CD8-positive, alpha-beta memory T cell (primary cell): ENCODE measurements at regions of chr2 and their contacts with region 1.

Region 1: GRCh38 chr2:144643537-144644336 is 123.8 kb upstream of the ZEB2 start:
- DNase-seq: no peak
- H3K4me3 ChIP-seq: no peak overlapping the region
- H3K4me3 Mint-ChIP-seq: no peak overlapping the region
- H3K27ac ChIP-seq: no peak overlapping the region
- H3K27ac Mint-ChIP-seq: no peak overlapping the region
- H3K4me1 ChIP-seq: no peaks in the 10 kb centered on the region
- H3K4me1 Mint-ChIP-seq: no peaks in the 10 kb centered on the region
- H3K27me3 ChIP-seq: no peaks in the 10 kb centered on the region
- H3K27me3 Mint-ChIP-seq: no peaks in the 10 kb centered on the region

Region 2: GRCh38 chr2:144479138-144479537 is 164.6 kb before region 1 on chr2:
- CTCF ChIA-PET with region 1: no interaction called
- POLR2A ChIA-PET with region 1: no interaction called
- DNase-seq: no peak
- H3K4me3 ChIP-seq: no peak overlapping the region
- H3K4me3 Mint-ChIP-seq: peak overlapping the region in 1 of 7 donors; percentile 65
- H3K27ac ChIP-seq: no peak overlapping the region
- H3K27ac Mint-ChIP-seq: peak overlapping the region in 2 of 8 donors; percentile 16 to 78
- H3K4me1 ChIP-seq: peaks cover 24% of the 10 kb centered on the region
- H3K4me1 Mint-ChIP-seq: peaks cover 45 to 78% (median 49%) of the 10 kb centered on the region in 3 donors
- H3K27me3 ChIP-seq: no peaks in the 10 kb centered on the region
- H3K27me3 Mint-ChIP-seq: no peaks in the 10 kb centered on the region

Region 3: GRCh38 chr2:144490017-144490416 is 153.7 kb before region 1 on chr2:
- CTCF ChIA-PET with region 1: no interaction called
- POLR2A ChIA-PET with region 1: interaction called, 10 read pairs
- DNase-seq: no peak
- H3K4me3 ChIP-seq: no peak overlapping the region
- H3K4me3 Mint-ChIP-seq: peak overlapping the region in 2 of 7 donors; percentile 5 to 38
- H3K27ac ChIP-seq: no peak overlapping the region
- H3K27ac Mint-ChIP-seq: peak overlapping the region in 4 of 8 donors; percentile 17 to 82 (median 64)
- H3K4me1 ChIP-seq: peaks cover 10% of the 10 kb centered on the region
- H3K4me1 Mint-ChIP-seq: peaks cover 47 to 71% (median 58%) of the 10 kb centered on the region in 3 donors
- H3K27me3 ChIP-seq: no peaks in the 10 kb centered on the region
- H3K27me3 Mint-ChIP-seq: no peaks in the 10 kb centered on the region

Region 4: DNA sequence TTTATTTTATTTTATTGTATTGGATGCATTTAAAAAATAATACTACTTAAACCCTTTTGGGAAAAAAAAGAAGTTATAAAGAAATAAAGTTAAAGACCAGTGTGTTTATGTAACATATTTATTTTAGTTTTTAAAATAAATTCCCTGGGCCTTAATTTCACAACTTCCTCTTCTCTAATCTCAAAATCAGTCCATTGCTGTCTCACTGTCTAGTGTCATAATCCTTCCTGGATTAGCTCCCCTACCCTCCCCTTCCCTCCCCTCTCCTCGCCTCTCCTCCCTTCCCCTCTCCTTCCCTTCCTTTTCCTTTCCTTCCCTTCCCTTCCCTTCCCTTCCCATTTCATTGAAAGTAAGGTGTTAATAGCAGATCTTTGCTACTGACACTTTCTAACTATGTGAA is 83.5 kb before region 1 on chr2:
- CTCF ChIA-PET with region 1: no interaction called
- POLR2A ChIA-PET with region 1: no interaction called
- DNase-seq: no peak
- H3K4me3 ChIP-seq: no peak overlapping the region
- H3K4me3 Mint-ChIP-seq: no peak overlapping the region
- H3K27ac ChIP-seq: no peak overlapping the region
- H3K27ac Mint-ChIP-seq: no peak overlapping the region
- H3K4me1 ChIP-seq: no peaks in the 10 kb centered on the region
- H3K4me1 Mint-ChIP-seq: no peaks in the 10 kb centered on the region
- H3K27me3 ChIP-seq: no peaks in the 10 kb centered on the region
- H3K27me3 Mint-ChIP-seq: peaks cover 0 to 2% of the 10 kb centered on the region in 2 donors